ENCODE measurements at regions of chr11 and their contacts with region 1.

Region 1: GRCh38 chr11:107573438-107573837 is 7.9 kb upstream of the ALKBH8 start:
- DNase-seq: no peak
- H3K4me3 ChIP-seq: no peak overlapping the region
- CTCF ChIP-seq: no peak

Region 2: GRCh38 chr11:107370390-107370789 is 203.0 kb before region 1 on chr11:
- CTCF ChIA-PET with region 1: no interaction called
- POLR2A ChIA-PET with region 1: no interaction called
- DNase-seq: no peak
- H3K4me3 ChIP-seq: no peak overlapping the region
- CTCF ChIP-seq: no peak

Region 3: GRCh38 chr11:107384144-107384852 is 189.1 kb before region 1 on chr11:
- CTCF ChIA-PET with region 1: no interaction called
- POLR2A ChIA-PET with region 1: no interaction called
- DNase-seq: no peak
- H3K4me3 ChIP-seq: no peak overlapping the region
- CTCF ChIP-seq: no peak

Region 4: GRCh38 chr11:107397357-107397756 is 176.1 kb before region 1 on chr11:
- CTCF ChIA-PET with region 1: no interaction called
- POLR2A ChIA-PET with region 1: no interaction called
- DNase-seq: no peak
- H3K4me3 ChIP-seq: no peak overlapping the region
- CTCF ChIP-seq: no peak

Region 5: GRCh38 chr11:107587306-107587979 is 14.0 kb after region 1 on chr11:
- CTCF ChIA-PET with region 1: interaction called, 15 read pairs
- POLR2A ChIA-PET with region 1: no interaction called
- DNase-seq: no peak
- H3K4me3 ChIP-seq: no peak overlapping the region
- CTCF ChIP-seq: no peak

Region 6: GRCh38 chr11:107898270-107898669 is 324.8 kb after region 1 on chr11:
- CTCF ChIA-PET with region 1: interaction called, 10 read pairs
- POLR2A ChIA-PET with region 1: no interaction called
- DNase-seq: no peak
- H3K4me3 ChIP-seq: no peak overlapping the region
- CTCF ChIP-seq: peak; percentile 48